Activated CD4-positive, alpha-beta T cell treated with anti-CD3 and anti-CD28 coated beads, Interleukin-2, amount 10 ng/mL, durations not matched to agents 24 days and 14 days (primary cell): ENCODE measurements at regions of chr12 and their contacts with region 1.

Region 1: DNA sequence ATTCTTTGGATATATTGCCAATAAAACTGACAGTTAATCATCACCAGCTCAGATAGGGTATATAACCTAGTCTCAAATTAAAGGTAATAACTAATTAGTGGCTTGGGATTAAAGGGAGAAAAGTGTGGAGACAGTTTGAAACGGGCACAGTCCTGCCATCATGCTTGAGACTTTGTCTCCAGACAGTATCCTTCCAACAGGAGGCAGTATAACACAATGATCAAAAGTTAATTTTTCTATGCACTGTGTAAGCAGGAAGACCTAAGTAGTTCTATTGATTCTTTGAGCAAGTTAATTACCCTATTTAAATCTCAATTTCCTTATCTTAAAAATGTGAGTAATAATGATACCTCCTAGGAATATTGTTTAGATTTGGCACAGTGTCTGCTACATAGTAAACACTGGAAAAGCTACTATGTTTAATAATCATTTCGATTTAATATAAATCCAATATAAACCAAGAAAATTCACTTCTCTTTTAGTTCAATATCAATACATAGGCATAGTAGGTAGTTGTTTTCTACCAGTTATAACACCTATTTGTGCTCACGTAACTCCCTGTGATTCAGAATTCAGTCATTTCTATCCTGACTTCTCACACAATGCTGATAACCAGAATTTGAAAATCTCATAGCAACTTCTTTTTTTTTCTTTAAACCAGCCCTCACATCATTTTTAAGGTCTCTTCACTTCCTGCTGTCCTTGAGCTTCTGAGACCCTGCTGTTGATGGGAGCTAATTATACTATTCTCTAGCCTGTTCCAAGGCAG is 53.7 kb downstream of the GALNT4 start:
- DNase-seq: peak; percentile 73
- H3K4me3 Mint-ChIP-seq: no peak overlapping the region
- H3K27ac Mint-ChIP-seq: peak overlapping the region; percentile 22
- H3K4me1 Mint-ChIP-seq: peaks cover 60% of the 10 kb centered on the region
- H3K27me3 Mint-ChIP-seq: no peaks in the 10 kb centered on the region

Region 2: DNA sequence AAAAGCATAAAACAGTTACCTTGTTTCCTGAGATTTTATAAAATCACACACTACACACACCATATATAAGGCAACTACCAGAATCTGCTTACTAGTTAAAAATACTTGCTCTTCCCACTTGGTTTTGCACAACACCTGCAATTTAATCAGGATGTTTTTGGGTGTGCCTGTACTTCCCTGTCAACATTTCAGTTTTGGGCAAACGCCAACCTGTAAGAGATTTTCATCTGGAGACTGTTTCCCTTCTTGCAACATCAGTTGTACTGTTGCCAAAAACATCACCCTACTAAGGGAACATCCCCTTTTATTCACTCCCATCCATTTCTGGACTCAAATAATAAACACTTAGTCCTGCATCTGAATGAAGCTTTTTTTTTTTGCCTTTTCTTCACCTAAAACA is 290.9 kb before region 1 on chr12:
- intact Hi-C with region 1: loop called (anchors 2 kb)
- DNase-seq: no peak
- H3K4me3 Mint-ChIP-seq: peak overlapping the region; percentile 38
- H3K27ac Mint-ChIP-seq: peak overlapping the region; percentile 81
- H3K4me1 Mint-ChIP-seq: peaks cover 51% of the 10 kb centered on the region
- H3K27me3 Mint-ChIP-seq: no peaks in the 10 kb centered on the region

Region 3: GRCh38 chr12:89389755-89390661 is 80.9 kb before region 1 on chr12:
- intact Hi-C with region 1: loop called (anchors 2 kb)
- DNase-seq: no peak
- H3K4me3 Mint-ChIP-seq: no peak overlapping the region
- H3K27ac Mint-ChIP-seq: peak overlapping the region; percentile 67
- H3K4me1 Mint-ChIP-seq: peaks cover 26% of the 10 kb centered on the region
- H3K27me3 Mint-ChIP-seq: no peaks in the 10 kb centered on the region

Region 4: GRCh38 chr12:89405626-89406345 is 65.1 kb before region 1 on chr12:
- intact Hi-C with region 1: no loop called
- DNase-seq: no peak
- H3K4me3 Mint-ChIP-seq: no peak overlapping the region
- H3K27ac Mint-ChIP-seq: no peak overlapping the region
- H3K4me1 Mint-ChIP-seq: peaks cover 6% of the 10 kb centered on the region
- H3K27me3 Mint-ChIP-seq: no peaks in the 10 kb centered on the region

Region 5: DNA sequence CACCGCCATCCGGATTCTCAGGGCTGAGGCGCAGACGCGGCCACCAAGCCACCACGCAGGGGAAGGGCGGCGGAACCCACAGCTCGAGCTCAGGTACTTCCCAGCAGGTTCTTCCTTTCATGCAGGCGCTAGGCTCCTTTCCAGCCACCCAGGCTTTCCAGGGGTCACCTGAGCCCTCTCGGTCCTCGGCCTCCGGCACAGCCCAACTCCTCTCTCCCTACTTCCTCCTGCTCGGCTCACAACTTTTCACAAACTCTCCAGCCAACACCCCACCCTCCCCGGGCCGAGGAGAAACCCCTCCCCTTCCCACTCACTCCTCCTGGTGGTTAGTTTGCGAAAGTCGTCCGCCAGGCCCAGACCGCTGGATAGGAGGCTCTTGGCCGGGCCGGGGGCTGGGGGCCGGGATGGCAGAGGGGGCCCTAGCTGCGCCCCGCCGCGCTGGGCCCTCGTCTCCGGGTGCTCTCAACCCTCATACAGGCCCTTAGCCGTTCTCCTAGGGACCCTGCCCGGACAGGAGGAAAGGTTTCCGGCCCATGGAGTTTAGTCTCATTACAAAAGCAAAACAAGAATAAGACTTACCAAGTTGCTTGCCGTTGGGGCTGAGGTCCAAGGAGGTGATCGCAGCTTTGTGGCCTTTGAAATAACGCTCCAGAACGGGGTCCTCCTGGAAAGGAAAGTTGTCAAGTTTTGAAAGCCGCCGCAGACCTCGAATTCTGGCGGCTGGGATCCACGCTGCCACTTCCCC is 53.8 kb after region 1 on chr12 and contains the start of gene GALNT4:
- intact Hi-C with region 1: loop called (anchors 1 kb)
- DNase-seq: peak; percentile 94
- H3K4me3 Mint-ChIP-seq: peak within 1 kb of the TSS; percentile 98
- H3K27ac Mint-ChIP-seq: peak within 1 kb of the TSS; percentile 99
- H3K4me1 Mint-ChIP-seq: peaks cover 49% of the 10 kb centered on the region
- H3K27me3 Mint-ChIP-seq: no peaks in the 10 kb centered on the region
- total RNA-seq, gene GALNT4: 6.9 and 7.6 TPM in 2 replicates

Region 6: GRCh38 chr12:89648211-89648930 is 177.4 kb after region 1 on chr12:
- intact Hi-C with region 1: no loop called
- DNase-seq: no peak
- H3K4me3 Mint-ChIP-seq: no peak overlapping the region
- H3K27ac Mint-ChIP-seq: no peak overlapping the region
- H3K4me1 Mint-ChIP-seq: no peaks in the 10 kb centered on the region
- H3K27me3 Mint-ChIP-seq: no peaks in the 10 kb centered on the region

Region 7: DNA sequence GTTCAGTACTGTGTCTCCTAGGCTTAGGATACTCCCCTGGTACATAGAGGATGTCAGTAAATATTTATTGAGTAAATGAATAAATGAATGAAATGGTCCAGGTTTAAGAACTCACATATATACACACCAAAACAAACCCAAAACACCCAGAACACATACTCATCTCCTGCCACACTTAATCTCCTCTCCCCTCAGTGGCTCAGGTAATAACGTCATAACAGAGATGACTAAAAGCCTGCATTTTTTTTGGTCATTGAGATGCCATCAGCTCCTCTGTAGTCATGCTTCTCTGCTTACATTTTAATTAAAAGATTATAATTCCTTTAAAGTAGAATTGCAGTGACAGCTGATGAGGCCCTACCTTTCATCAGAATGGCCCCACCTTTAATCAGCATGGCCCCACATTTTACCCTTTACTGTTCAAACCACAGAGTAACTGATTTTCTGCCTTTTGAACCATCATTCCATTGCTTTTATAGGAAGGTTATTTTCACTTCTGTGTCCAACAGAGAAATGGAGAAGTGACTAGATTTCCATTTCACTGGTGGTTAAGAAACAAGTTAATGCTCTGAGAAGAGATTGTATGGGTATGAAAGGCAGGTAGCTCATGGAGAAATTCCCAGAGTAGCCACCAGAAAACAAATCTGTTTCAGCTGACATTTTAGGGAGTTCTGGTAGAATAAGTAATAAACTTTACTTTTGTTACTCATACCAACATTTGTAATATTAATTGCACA is 431.1 kb after region 1 on chr12:
- intact Hi-C with region 1: no loop called
- DNase-seq: no peak
- H3K4me3 Mint-ChIP-seq: no peak overlapping the region
- H3K27ac Mint-ChIP-seq: no peak overlapping the region
- H3K4me1 Mint-ChIP-seq: no peaks in the 10 kb centered on the region
- H3K27me3 Mint-ChIP-seq: no peaks in the 10 kb centered on the region